ENCODE measurements at regions of chr2 and their contacts with region 1.

Region 1: GRCh38 chr2:65576861-65577601 is 144.6 kb upstream of the SPRED2 start:
- DNase-seq: peak; percentile 84
- ATAC-seq: peak; percentile 90
- H3K4me3 ChIP-seq: peak overlapping the region in 1 of 2 experiments; percentile 1; a peak in 1 of 4 replicates
- H3K27ac ChIP-seq: peak overlapping the region; percentile 67
- H3K4me1 ChIP-seq: peaks cover 14% of the 10 kb centered on the region
- H3K27me3 ChIP-seq: no peaks in the 10 kb centered on the region
- CTCF ChIP-seq: no peak

Region 2: GRCh38 chr2:65040400-65041261 is 536.4 kb before region 1 on chr2:
- CTCF ChIA-PET with region 1: no interaction called
- POLR2A ChIA-PET with region 1: interaction called, 4 read pairs
- in situ Hi-C with region 1: no loop called
- intact Hi-C with region 1: loop called (anchors 10 kb)
- DNase-seq: peak; percentile 74
- ATAC-seq: peak; percentile 99
- H3K4me3 ChIP-seq: 0 out of 4 replicates have a peak overlapping the region, but pooled peaks of 1 of the 2 experiments have one; percentile 14
- H3K27ac ChIP-seq: no peak overlapping the region
- H3K4me1 ChIP-seq: no peaks in the 10 kb centered on the region
- H3K27me3 ChIP-seq: no peaks in the 10 kb centered on the region
- CTCF ChIP-seq: peak; percentile 93

Region 3: DNA sequence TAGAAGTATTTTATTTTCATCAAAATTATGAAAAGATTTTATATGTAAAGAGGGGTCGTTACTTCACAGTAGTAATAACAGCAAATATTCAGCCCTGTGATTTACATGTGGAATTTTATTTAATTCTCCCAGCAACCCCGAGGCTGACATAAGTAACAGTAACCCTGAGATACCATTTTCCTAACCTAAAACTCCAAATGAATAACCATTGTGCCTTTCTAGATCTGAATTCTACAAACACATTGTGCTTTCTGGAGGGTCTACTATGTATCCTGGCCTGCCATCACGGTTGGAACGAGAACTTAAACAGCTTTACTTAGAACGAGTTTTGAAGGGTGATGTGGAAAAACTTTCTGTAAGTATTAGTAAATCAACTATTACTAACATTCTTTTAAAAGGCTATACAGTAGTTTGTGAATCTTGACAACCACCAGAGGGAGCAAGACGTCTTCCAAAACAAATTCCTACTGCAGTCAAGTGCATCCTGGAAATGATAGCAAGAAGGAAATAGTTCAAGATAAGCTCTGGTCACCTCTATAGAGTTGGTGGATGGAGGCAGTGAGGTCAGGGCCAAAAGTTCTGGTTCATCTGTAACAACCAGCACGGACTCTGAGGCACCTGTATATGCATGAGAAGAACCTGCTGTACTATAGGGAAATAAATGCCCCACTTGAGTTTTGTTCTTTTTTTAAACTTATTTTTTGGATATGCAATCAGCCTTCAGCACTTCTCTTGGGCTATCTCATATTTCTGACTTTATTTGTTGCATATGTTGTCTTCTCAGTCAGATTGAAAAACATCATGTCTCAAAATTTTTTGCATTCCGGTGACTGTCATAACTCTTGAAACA is 312.0 kb before region 1 on chr2:
- CTCF ChIA-PET with region 1: no interaction called
- POLR2A ChIA-PET with region 1: no interaction called
- in situ Hi-C with region 1: no loop called
- intact Hi-C with region 1: loop called (anchors 2 kb)
- DNase-seq: peak; percentile 54
- ATAC-seq: peak; percentile 70
- H3K4me3 ChIP-seq: no peak overlapping the region
- H3K27ac ChIP-seq: no peak overlapping the region
- H3K4me1 ChIP-seq: peaks cover 17% of the 10 kb centered on the region
- H3K27me3 ChIP-seq: no peaks in the 10 kb centered on the region
- CTCF ChIP-seq: peak; percentile 74

Region 4: GRCh38 chr2:65800998-65801397 is 224.0 kb after region 1 on chr2:
- CTCF ChIA-PET with region 1: no interaction called
- POLR2A ChIA-PET with region 1: no interaction called
- in situ Hi-C with region 1: no loop called
- intact Hi-C with region 1: no loop called
- DNase-seq: no peak
- ATAC-seq: no peak
- H3K4me3 ChIP-seq: no peak overlapping the region
- H3K27ac ChIP-seq: no peak overlapping the region
- H3K4me1 ChIP-seq: no peaks in the 10 kb centered on the region
- H3K27me3 ChIP-seq: no peaks in the 10 kb centered on the region
- CTCF ChIP-seq: peak; percentile 46